WTC11 (cell line): ENCODE measurements at regions of chr19 and their contacts with region 1.

Region 1: GRCh38 chr19:40633207-40633606 is 32.0 kb downstream of the LTBP4 start:
- DNase-seq: no peak
- ATAC-seq: no peak
- H3K4me3 Mint-ChIP-seq: peak overlapping the region; percentile 32; the same call in 1 of the 2 replicates
- H3K27ac Mint-ChIP-seq: no peak overlapping the region
- H3K4me1 Mint-ChIP-seq: peaks cover 44% of the 10 kb centered on the region
- H3K27me3 Mint-ChIP-seq: peaks cover 51% of the 10 kb centered on the region
- CTCF ChIP-seq: no peak

Region 2: DNA sequence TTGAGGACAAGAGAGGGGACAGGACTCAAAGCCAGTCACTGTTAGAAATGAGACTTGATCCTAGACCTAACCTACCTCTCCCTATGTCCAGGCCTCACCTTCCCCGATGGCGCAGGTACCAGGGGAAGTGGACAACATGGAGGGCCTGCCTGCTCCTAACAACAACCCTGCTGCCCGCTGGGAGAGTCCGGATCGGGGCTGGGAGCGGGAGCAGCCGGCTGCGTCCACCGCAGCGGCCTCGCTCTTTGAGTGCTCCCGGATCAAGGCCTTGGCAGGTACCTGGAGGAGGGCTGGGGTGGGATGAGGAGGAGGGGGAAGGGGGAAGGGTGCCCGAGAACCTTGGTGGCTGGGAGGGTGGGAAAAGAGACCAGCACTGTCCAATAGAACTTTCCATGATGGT is 160.7 kb before region 1 on chr19:
- CTCF ChIA-PET with region 1: no interaction called
- POLR2A ChIA-PET with region 1: no interaction called
- DNase-seq: no peak
- ATAC-seq: no peak
- H3K4me3 Mint-ChIP-seq: no peak overlapping the region
- H3K27ac Mint-ChIP-seq: no peak overlapping the region
- H3K4me1 Mint-ChIP-seq: no peaks in the 10 kb centered on the region
- H3K27me3 Mint-ChIP-seq: peaks cover 22% of the 10 kb centered on the region
- CTCF ChIP-seq: no peak

Region 3: GRCh38 chr19:40523322-40524047 is 109.7 kb before region 1 on chr19:
- CTCF ChIA-PET with region 1: interaction called, 14 read pairs
- POLR2A ChIA-PET with region 1: interaction called, 3 read pairs
- DNase-seq: peak; percentile 87
- ATAC-seq: peak; percentile 91
- H3K4me3 Mint-ChIP-seq: no peak overlapping the region
- H3K27ac Mint-ChIP-seq: no peak overlapping the region
- H3K4me1 Mint-ChIP-seq: peaks cover 6% of the 10 kb centered on the region
- H3K27me3 Mint-ChIP-seq: peaks cover 65% of the 10 kb centered on the region
- CTCF ChIP-seq: peak; percentile 75

Region 4: DNA sequence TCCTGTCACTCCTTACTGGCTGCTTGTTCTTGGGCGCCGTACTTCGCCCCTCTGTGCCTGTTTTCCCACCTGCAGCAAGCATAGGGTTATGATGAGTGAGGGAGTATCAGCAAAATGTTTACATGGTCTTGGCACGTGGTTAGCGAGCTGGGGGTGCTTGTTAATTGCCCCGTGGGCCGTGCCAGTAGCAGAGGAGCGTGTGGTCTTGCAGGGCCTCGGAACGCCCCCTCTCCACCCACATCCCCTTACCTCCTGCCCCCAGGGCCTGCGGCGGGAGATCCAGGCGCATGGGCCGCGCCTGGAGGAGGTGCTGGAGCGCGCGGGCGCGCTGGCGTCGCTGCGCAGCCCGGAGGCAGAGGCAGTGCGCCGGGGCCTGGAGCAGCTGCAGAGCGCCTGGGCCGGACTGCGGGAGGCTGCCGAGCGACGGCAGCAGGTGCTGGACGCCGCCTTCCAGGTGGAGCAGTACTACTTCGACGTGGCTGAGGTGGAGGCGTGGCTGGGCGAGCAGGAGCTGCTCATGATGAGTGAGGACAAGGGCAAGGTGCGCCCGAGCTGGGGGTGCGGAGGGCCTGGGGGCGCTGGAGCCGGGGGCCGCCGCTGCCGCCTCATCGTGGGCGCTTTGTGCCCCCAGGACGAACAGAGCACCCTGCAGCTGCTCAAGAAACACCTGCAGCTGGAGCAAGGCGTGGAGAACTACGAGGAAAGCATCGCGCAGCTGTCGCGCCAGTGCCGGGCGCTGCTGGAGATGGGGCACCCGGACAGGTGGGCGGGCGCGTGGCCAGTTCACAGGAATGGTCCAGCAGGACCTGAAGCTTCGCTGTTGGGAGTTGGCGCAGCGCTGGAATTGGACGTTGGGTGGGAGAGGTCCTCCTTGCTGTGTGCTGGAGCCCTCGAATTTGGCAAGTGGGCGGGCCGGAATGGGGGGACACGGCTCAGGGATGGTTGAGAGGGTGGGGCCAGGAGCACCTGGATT is 79.0 kb before region 1 on chr19:
- CTCF ChIA-PET with region 1: interaction called, 43 read pairs
- POLR2A ChIA-PET with region 1: no interaction called
- DNase-seq: peak; percentile 72
- ATAC-seq: peak; percentile 86
- H3K4me3 Mint-ChIP-seq: peak overlapping the region; percentile 60
- H3K27ac Mint-ChIP-seq: no peak overlapping the region
- H3K4me1 Mint-ChIP-seq: peaks cover 13% of the 10 kb centered on the region
- H3K27me3 Mint-ChIP-seq: peaks cover 91% of the 10 kb centered on the region
- CTCF ChIP-seq: no peak

Region 5: DNA sequence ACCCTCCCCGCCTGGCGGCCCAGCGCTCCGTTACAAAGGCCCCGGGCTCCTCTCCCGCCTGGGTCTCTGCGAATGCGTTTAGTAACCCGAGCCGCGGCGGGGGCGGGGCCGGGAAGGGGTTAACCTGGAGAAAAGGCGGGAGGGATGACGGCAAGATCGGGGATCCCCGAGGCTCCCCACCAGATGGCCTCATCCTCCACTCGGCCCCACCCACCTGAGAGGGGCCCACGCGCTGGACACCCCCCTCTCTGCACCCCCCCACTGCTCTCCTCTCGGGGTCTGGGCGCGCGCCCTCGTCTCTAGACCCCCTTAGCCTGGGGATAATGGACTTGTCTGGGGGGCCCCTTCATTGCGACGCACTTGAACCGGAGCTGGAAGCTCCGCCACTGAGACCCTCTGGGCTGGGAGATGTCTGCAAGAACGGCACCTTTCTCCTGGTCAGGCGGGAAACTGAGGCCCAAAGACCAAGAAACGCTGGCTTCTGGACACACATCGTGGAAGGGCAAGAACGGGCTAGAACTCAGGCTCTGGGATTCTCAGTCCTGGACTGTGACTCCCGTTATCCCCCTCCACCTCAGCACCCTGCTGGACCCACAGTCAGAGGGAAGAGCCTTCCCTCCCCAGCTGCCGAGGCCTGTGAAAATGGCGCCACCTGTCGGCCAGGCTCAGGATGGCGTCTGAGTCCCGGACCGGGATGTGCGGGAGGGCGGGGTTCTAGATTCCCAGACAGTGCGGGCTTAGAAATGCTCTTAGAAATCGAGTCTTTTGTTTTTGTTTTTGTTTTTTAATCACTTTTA is 34.9 kb before region 1 on chr19:
- CTCF ChIA-PET with region 1: interaction called, 101 read pairs
- POLR2A ChIA-PET with region 1: no interaction called
- DNase-seq: peak; percentile 93
- ATAC-seq: peak; percentile 32
- H3K4me3 Mint-ChIP-seq: peak overlapping the region; percentile 76
- H3K27ac Mint-ChIP-seq: peak overlapping the region; percentile 82; the same call in 1 of the 2 replicates
- H3K4me1 Mint-ChIP-seq: peaks cover 44% of the 10 kb centered on the region
- H3K27me3 Mint-ChIP-seq: peaks cover 82% of the 10 kb centered on the region
- CTCF ChIP-seq: peak; percentile 99

Region 6: GRCh38 chr19:40646564-40647254 is 13.5 kb after region 1 on chr19:
- CTCF ChIA-PET with region 1: interaction called, 65 read pairs
- POLR2A ChIA-PET with region 1: no interaction called
- DNase-seq: no peak
- ATAC-seq: no peak
- H3K4me3 Mint-ChIP-seq: no peak overlapping the region
- H3K27ac Mint-ChIP-seq: no peak overlapping the region
- H3K4me1 Mint-ChIP-seq: no peaks in the 10 kb centered on the region
- H3K27me3 Mint-ChIP-seq: peaks cover 9% of the 10 kb centered on the region
- CTCF ChIP-seq: no peak

Region 7: DNA sequence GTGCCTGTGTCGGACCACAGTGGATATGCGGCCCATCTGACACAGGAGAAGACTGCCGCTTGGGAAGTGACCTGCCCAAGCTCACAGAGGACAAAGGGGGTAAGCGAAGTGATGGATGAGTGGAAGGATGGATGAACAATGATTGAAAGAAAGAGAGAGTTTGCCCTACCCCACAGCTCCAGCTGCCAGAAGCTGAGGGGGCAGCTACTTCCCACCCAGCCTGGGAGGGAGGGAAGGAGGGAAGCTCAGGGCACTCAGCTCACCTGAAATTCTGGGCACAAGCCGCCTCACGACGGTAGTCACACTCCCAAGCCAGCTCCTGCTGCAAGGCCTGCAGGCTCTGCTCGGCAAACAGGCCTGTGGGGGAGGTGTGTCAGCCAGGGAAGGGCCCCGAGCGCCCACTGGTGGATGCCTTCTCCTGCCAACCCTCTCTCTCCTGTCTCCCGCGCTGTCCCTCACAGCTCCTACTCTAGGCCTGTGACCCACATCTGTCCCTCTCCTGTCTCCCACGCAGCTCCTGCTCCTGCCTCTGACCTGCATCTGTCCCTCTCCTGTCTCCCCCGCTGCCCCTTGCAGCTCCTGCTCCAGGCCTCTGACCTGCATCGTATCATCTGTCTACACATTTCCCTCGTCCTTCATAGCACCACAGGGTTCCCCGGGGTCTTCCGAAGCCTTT is 69.3 kb after region 1 on chr19:
- CTCF ChIA-PET with region 1: interaction called, 13 read pairs
- POLR2A ChIA-PET with region 1: no interaction called
- DNase-seq: peak; percentile 78
- ATAC-seq: peak; percentile 95
- H3K4me3 Mint-ChIP-seq: no peak overlapping the region
- H3K27ac Mint-ChIP-seq: peak overlapping the region; percentile 85
- H3K4me1 Mint-ChIP-seq: peaks cover 8% of the 10 kb centered on the region; the same call in 1 of the 2 replicates
- H3K27me3 Mint-ChIP-seq: no peaks in the 10 kb centered on the region
- CTCF ChIP-seq: peak; percentile 18; the same call in 1 of the 2 replicates

Region 8: GRCh38 chr19:40750059-40750873 is 117.1 kb after region 1 on chr19 and contains the start of gene ACTMAP:
- CTCF ChIA-PET with region 1: no interaction called
- POLR2A ChIA-PET with region 1: no interaction called
- DNase-seq: peak; percentile 99
- ATAC-seq: peak; percentile 93
- H3K4me3 Mint-ChIP-seq: peak within 1 kb of the TSS; percentile 99
- H3K27ac Mint-ChIP-seq: peak within 1 kb of the TSS; percentile 100
- H3K4me1 Mint-ChIP-seq: peaks cover 38% of the 10 kb centered on the region
- H3K27me3 Mint-ChIP-seq: no peaks in the 10 kb centered on the region
- CTCF ChIP-seq: no peak
- total RNA-seq, gene ACTMAP: 29.6 to 42.4 TPM (median 40.2 TPM) in 3 replicates

Region 9: GRCh38 chr19:40791349-40791748 is 158.1 kb after region 1 on chr19:
- CTCF ChIA-PET with region 1: no interaction called
- POLR2A ChIA-PET with region 1: no interaction called
- DNase-seq: no peak
- ATAC-seq: no peak
- H3K4me3 Mint-ChIP-seq: no peak overlapping the region
- H3K27ac Mint-ChIP-seq: peak overlapping the region; percentile 68
- H3K4me1 Mint-ChIP-seq: 0 out of 2 replicates have a peak, but pooled peaks cover 2% of the 10 kb centered on the region
- H3K27me3 Mint-ChIP-seq: no peaks in the 10 kb centered on the region
- CTCF ChIP-seq: no peak

Region 10: GRCh38 chr19:40822161-40822560 is 189.0 kb after region 1 on chr19:
- CTCF ChIA-PET with region 1: no interaction called
- POLR2A ChIA-PET with region 1: no interaction called
- DNase-seq: no peak
- ATAC-seq: no peak
- H3K4me3 Mint-ChIP-seq: no peak overlapping the region
- H3K27ac Mint-ChIP-seq: peak overlapping the region; percentile 68
- H3K4me1 Mint-ChIP-seq: peaks cover 16% of the 10 kb centered on the region
- H3K27me3 Mint-ChIP-seq: peaks cover 14% of the 10 kb centered on the region
- CTCF ChIP-seq: no peak